Gastrocnemius medialis (tissue), 4 donors: ENCODE measurements at regions of chr11 and their contacts with region 1.

Region 1: DNA sequence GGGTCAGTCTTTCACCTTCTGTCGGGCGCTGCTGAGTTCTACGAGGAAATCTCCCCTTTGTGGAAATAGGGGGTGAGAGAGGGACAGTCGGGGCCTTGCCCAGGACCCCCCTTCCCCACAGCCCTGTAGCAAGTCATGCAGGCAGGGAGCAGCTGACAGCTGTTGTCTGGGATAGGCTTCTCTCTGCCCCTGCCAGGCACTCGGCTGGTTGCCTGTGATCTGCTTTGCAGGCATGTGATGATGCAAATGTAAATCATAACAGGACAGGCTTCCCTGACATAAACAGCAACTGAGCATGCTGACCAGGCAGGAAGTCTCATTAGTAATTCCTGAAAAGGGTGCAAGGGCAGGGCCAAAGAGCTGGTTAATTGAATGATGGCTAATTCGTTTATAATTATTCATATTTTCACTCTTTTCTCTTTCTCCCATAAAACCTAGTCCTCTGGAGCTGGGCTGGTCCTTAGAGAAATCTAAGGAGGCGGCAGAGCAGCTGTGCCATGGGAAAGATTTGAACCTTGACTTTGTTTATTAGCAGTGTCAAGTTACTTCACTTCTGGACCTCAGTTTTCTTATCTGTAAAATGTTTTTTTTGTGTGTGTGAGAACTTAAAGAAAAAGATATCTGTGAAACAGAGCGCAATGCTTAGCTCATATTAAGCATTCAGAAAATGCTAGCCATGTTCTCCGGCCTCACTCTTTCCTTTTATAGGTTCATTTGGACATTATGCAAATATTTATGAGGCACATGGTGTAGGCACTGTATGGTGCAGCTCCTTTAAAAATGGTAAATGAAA is 129.7 kb downstream of the LDLRAD3 start:
- DNase-seq: peak; percentile 86
- ATAC-seq: peak; percentile 96
- H3K4me3 ChIP-seq: peak overlapping the region in 1 of 4 donors; percentile 19
- H3K27ac ChIP-seq: peak overlapping the region; percentile 47 to 71 (median 66)
- H3K4me1 ChIP-seq: peaks cover 23 to 31% of the 10 kb centered on the region in 2 donors
- H3K27me3 ChIP-seq: no peaks in the 10 kb centered on the region
- CTCF ChIP-seq: no peak
- POLR2A ChIP-seq: peak in 1 of 2 donors; percentile 23

Region 2: DNA sequence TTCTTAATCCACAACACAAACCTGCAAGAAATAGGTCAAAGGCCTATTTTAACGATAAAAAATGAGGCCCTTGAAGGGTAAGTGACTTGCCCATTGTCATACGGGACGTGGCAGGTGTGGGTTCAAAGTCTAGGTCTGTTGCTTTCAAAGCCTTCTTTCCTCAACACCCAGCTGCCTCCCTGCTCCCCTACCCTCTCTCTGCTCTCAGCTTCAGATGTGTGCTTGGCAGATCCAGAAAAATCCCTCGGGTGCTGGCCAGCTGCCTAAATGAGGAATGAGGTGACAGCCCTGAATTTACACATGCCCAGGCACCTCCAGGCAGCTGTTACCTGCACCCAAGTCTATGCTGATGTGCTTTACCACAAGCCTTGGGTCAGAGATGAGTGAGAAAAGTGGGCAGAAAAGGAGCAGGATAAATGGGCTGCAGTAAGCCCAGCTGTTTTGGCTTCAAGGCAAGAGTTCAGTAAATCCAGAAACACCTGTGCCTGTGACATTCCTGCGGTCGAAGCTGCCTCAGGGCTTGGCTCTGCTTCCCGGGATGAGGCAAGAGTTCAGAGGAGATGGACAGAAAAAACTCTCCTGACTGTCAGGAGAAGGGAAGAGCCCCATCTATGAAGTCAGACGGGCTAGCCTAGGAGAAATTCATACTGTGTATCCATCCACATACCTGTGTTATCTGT is 179.7 kb before region 1 on chr11:
- in situ Hi-C with region 1: no loop called
- intact Hi-C with region 1: loop called (anchors 10 kb)
- DNase-seq: peak; percentile 71 to 72
- ATAC-seq: peak; percentile 94 to 98
- H3K4me3 ChIP-seq: no peak overlapping the region
- H3K27ac ChIP-seq: no peak overlapping the region
- H3K4me1 ChIP-seq: peaks cover 0 to 8% of the 10 kb centered on the region in 2 donors
- H3K27me3 ChIP-seq: peaks cover 0 to 9% (median 0%) of the 10 kb centered on the region in 3 donors
- CTCF ChIP-seq: no peak
- POLR2A ChIP-seq: no peak

Region 3: DNA sequence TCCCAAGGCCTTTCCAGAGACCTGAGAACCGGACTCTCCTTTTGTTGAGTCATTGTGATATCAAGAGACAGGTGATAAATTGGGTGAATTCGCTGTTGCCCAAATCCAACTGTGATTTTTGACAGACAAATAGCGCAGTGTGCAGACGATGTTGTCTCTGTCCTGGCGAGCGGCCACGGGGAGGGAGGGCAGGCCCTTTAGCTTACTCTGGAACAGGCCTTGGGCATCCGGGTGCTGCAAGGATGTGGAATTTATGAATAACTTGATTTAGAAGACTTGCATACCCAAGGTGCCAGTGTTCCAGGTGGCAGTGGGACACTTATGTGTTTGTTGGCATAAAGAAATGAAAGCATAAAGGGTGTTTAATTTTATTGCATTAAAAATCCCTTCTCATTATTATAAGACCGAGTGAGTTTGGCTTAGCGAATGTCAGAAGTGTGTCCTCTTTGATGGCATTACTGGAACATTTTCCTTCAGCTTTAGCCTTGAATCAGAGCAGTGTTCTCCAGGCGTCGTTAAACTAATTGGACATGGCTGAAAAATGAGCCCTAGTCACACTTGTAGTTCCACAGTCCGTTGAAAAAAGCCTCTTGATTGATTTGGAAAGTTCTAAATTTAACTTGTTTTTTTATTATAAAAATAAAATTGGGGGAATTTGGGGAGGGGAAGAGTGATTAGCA is 120.4 kb before region 1 on chr11:
- in situ Hi-C with region 1: no loop called
- intact Hi-C with region 1: loop called (anchors 5 kb)
- DNase-seq: no peak
- ATAC-seq: no peak
- H3K4me3 ChIP-seq: no peak overlapping the region
- H3K27ac ChIP-seq: no peak overlapping the region
- H3K4me1 ChIP-seq: peaks cover 3 to 17% of the 10 kb centered on the region in 2 donors
- H3K27me3 ChIP-seq: no peaks in the 10 kb centered on the region
- CTCF ChIP-seq: no peak
- POLR2A ChIP-seq: no peak

Region 4: DNA sequence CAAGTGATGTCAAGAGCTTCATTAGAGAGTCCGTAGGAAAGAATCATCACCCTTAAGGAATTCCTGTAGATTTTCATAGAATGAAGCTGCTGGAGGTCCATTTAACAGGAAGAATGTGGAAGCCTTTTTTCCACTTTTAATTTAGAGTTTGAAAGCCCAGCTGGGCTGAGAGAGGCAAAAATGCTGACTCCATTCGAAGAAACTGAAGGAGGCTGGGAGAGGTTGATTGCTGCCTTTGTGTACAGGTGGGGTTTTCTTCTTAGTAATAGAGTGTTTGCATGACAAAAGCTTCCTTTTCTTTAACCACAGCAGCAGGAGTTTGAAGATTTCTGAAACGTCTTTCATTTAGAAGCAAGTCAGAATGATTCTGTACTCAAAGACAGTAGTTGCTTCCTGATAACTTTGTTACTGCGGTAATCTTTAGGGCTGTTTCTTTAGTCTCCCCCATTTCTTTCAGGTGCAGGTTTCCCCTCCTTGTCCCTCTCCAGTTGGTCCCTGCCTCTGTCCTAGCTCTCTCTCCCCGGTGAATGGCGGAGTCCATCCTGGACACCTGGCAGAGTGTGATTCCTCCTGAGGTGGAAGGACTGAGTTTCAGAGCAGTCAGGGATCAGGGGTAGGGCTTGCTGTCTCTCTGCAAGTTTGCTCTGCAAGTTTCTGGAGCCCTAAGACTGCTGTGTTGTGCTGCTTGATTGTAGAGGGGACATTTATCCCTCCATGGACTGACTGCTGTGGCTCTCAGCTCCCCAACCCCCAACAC is 36.4 kb after region 1 on chr11:
- in situ Hi-C with region 1: no loop called
- intact Hi-C with region 1: no loop called
- DNase-seq: no peak
- ATAC-seq: no peak
- H3K4me3 ChIP-seq: no peak overlapping the region
- H3K27ac ChIP-seq: no peak overlapping the region
- H3K4me1 ChIP-seq: no peaks in the 10 kb centered on the region
- H3K27me3 ChIP-seq: no peaks in the 10 kb centered on the region
- CTCF ChIP-seq: no peak
- POLR2A ChIP-seq: no peak

Region 5: DNA sequence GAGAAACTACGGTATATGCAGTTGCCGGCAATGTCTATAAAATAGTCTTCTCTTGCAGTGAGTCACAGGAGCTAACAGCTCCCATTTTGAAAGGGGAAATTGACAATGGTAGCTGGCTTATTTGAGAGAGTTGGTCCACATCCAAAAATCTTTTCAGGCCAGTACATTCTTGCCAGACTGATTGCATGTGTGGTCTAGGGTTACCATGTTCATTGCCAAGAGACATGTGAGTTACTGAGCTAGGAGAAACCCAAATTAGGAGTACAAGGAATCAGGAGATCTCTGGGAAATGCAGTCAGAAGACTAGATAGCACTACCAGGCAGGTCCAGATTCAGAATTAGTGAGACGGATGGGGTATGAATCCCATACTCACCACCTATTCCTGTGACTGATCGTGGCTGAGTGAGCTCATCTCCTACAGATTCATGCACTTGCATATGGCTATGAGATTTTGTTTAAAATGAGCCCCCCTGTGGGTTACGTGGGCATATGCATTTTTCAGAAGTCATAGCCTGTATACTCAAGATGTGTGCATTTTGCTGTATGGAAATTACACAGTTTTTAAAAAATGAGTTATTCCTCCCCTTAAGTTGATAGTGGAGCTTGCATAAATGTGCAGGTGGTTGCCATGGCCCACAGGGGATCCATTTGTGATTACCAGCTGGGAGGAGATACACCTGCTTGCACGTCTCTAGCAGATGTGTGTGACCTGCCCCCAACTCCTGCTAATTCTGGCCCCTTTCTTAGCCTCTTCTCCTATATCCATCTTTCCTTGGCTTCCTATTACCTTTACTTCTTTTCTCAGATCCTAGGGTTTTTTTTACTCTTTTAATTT is 113.0 kb after region 1 on chr11:
- in situ Hi-C with region 1: loop called in 1 of 4 experiments (anchors 10 kb)
- intact Hi-C with region 1: loop called (anchors 2 kb)
- DNase-seq: peak; percentile 58 to 71
- ATAC-seq: peak; percentile 96
- H3K4me3 ChIP-seq: no peak overlapping the region
- H3K27ac ChIP-seq: peak overlapping the region; percentile 68 to 84 (median 76)
- H3K4me1 ChIP-seq: peaks cover 23 to 24% of the 10 kb centered on the region in 2 donors
- H3K27me3 ChIP-seq: no peaks in the 10 kb centered on the region
- CTCF ChIP-seq: no peak
- POLR2A ChIP-seq: no peak

Region 6: DNA sequence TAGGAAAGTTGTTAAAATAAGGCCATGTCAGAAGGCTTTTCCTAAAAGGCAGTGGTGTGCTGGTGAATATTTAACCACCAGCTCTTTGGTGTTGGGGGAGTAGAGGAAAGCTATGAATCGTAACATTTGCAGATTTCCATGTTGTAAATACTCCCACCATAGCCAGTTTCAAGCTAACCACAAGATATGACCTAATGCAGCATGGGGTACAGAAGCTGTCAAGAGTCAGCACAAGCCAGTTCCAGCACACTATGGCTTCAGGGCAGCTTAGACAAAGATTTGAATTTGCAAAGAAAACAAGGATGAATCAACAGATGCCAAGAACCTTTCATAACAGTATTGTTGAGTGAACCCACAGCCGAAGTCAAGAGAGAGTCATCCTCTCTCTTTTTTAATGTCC is 175.6 kb after region 1 on chr11:
- in situ Hi-C with region 1: no loop called
- intact Hi-C with region 1: no loop called
- DNase-seq: no peak
- ATAC-seq: no peak
- H3K4me3 ChIP-seq: no peak overlapping the region
- H3K27ac ChIP-seq: no peak overlapping the region
- H3K4me1 ChIP-seq: no peaks in the 10 kb centered on the region
- H3K27me3 ChIP-seq: no peaks in the 10 kb centered on the region
- CTCF ChIP-seq: no peak
- POLR2A ChIP-seq: no peak